ENCODE measurements at regions of chr21 and their contacts with region 1.

Region 1: DNA sequence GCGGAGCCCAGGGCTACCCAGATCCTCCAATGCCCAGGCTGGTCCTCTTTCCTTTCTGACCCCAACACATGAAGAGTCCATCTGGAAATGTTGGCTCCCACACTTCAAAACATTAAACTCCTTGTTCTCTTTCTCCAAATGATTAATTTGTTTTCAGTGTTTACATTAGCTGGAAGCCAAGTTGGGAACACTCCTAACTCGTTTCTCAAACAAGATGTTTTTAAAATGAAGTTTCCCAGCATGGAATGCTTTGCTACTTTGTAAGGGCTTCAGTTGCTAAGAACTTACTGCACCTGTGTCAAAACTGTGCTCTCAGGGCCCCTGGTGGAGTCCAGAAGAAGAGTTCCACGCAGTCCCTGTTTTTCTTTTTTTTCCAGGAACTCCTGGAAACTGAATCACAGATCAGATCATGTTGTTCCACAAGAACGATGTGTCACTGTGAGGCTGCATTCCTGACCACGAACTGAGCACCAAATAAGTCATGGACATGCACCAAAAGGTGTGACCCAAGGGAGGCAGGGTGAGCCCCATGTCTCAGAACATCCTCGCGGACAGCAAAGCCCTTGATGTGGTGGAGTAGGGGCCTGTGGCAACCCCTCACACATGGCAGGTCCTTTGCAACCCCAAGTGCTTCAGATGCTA is 257.3 kb downstream of the KCNJ6 start:
- DNase-seq: peak; percentile 35 to 82
- H3K4me3 ChIP-seq: peak overlapping the region in 1 of 2 donors; percentile 26
- H3K27ac ChIP-seq: peak overlapping the region; percentile 67 to 81
- H3K4me1 ChIP-seq: peaks cover 5 to 14% of the 10 kb centered on the region in 2 donors
- H3K27me3 ChIP-seq: no peaks in the 10 kb centered on the region
- CTCF ChIP-seq: peak; percentile 3 to 39 (median 37)

Region 2: DNA sequence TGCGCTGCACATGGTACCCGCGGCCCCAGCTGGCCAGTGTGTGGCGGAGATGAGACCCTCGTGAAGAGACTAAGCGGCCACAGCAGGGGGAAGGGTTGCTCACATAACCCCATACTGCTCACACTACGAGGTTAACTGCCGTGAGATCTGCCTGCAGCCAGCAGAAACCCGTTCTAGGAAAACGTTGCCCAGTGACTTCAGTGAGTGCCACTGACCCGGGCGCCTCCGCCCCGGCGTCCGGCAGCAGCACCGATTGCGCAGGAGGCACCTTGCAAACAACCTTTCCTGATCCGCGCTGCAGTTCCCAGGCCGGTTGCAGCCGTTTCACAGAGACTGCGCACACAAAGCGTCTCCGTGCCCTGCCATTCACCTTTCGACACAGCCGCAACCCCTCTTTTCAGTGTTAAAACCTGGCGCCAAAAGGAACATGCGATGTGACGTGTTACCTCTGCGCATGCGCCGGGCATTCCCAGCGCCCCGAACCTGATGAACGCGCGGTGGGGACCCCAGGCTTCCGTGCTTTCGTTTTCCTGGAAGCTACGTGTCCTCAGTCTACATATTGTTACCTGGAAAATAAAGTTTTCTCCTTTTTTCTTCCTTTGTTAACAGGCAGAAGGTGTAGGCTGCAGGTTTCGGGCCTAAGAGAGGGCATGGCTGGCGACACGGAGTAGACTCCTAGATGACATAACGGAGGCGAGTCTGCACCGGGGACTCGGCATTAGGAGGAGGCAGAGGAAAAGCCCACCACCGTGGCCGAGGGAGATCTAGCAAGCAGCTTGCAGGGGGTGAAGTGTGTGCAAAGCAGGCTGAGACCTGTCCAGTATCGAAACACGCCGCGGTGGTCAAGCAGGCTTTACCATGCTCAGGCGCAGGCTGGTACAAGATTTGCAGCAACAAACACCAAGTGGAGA is 400.7 kb before region 1 on chr21:
- intact Hi-C with region 1: loop called (anchors 2 kb)
- DNase-seq: no peak
- H3K4me3 ChIP-seq: peak overlapping the region; percentile 60 to 69
- H3K27ac ChIP-seq: peak overlapping the region; percentile 57
- H3K4me1 ChIP-seq: peaks cover 0 to 16% of the 10 kb centered on the region in 2 donors
- H3K27me3 ChIP-seq: no peaks in the 10 kb centered on the region
- CTCF ChIP-seq: no peak

Region 3: GRCh38 chr21:37338671-37339551 is 320.0 kb before region 1 on chr21:
- intact Hi-C with region 1: loop called (anchors 1 kb)
- DNase-seq: peak in 1 of 2 donors; percentile 74
- H3K4me3 ChIP-seq: no peak overlapping the region
- H3K27ac ChIP-seq: peak overlapping the region; percentile 86 to 95
- H3K4me1 ChIP-seq: peaks cover 0 to 21% of the 10 kb centered on the region in 2 donors
- H3K27me3 ChIP-seq: no peaks in the 10 kb centered on the region
- CTCF ChIP-seq: no peak

Region 4: DNA sequence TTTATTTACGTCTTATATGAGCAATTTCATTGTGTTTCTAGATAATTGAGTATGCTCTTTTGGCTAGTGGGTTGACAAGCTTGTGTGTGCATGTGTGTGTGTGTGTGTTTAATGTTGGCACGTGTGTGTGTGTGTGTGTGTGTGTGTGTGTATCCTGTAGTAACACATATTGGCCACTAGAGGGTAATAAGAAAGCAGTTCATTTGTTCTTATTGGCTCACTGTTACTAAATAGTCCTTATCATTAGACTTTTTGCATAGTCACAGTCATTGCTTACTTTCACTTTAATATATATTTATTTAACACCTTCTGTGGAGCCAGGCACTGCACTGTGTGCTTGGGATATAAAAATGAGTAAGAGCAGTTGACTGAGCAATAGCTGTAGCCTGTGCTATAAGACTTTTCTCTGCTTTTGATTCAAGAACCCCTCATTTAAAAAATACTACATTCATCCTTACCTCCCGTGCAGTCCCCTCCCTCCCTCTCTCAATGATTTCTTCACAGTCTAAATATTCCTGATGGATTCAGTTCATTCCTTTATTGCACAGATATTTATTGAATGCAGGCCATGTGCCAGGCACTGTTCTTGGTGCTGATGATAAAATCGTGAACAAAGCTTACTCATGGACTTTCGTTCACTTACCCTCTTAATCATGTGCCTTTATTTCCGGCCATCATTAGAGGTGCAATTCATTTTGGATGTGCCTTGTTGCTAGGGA is 195.7 kb before region 1 on chr21:
- intact Hi-C with region 1: loop called (anchors 5 kb)
- DNase-seq: no peak
- H3K4me3 ChIP-seq: peak overlapping the region in 1 of 2 donors; percentile 20
- H3K27ac ChIP-seq: peak overlapping the region in 1 of 2 donors; percentile 39
- H3K4me1 ChIP-seq: peaks cover 9 to 62% of the 10 kb centered on the region in 2 donors
- H3K27me3 ChIP-seq: no peaks in the 10 kb centered on the region
- CTCF ChIP-seq: peak; percentile 31 to 48 (median 44)